ENCODE measurements at regions of chr10 and their contacts with region 1.

Region 1: GRCh38 chr10:32055813-32056600 is at the start of gene KIF5B:
- DNase-seq: peak; percentile 94
- H3K4me3 Mint-ChIP-seq: peak within 1 kb of the TSS; percentile 98
- H3K27ac Mint-ChIP-seq: peak within 1 kb of the TSS; percentile 75
- H3K4me1 Mint-ChIP-seq: peaks cover 8% of the 10 kb centered on the region
- H3K27me3 Mint-ChIP-seq: no peaks in the 10 kb centered on the region
- CTCF ChIP-seq: no peak
- total RNA-seq, gene KIF5B: 106 and 108 TPM in 2 replicates

Region 2: DNA sequence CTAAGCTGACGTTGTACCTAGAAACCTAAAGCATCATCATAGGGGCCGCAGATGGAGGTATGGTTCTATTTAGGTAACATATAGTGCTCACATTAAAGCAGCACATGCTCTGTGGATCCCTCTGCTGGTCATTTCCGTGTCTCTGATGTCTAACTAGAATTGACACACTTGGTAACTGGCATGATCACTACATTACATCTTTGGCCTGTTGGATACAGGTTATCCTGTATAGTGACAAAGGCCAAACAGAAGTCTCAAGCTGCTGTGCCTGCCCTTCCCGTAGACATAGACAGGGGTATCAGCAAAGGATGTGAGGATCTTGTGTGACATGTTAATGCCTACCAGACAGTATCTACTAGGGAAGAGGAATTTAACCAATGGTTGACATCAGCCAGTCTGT is 51.0 kb before region 1 on chr10:
- CTCF ChIA-PET with region 1: no interaction called
- intact Hi-C with region 1: no loop called
- DNase-seq: peak; percentile 64
- H3K4me3 Mint-ChIP-seq: no peak overlapping the region
- H3K27ac Mint-ChIP-seq: no peak overlapping the region
- H3K4me1 Mint-ChIP-seq: no peaks in the 10 kb centered on the region
- H3K27me3 Mint-ChIP-seq: no peaks in the 10 kb centered on the region
- CTCF ChIP-seq: peak; percentile 68

Region 3: DNA sequence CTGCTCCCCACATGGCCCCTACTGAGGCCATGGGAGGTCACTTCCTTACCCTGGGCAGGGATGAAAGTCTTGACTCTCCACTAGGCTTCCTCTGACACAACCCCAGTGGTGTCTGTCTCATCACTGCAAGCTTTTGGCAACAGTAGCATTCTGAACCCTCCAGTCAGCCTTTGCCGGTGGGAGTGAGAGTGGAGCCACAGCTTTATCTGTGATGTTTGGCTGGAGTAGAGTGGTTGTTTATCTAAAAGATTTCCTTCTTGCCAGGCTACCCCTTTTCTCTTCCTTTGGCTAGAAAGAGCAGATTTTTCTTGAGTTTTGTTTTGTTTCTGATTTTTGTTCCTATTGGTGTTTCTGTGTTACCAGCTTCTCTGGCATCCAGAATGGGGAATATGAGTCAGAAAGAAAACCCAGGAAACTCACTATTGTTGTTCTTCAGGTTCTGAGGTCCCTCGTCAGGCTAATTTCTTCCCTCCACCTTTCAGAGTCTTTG is 99.1 kb after region 1 on chr10:
- CTCF ChIA-PET with region 1: no interaction called
- intact Hi-C with region 1: loop called (anchors 10 kb)
- DNase-seq: no peak
- H3K4me3 Mint-ChIP-seq: no peak overlapping the region
- H3K27ac Mint-ChIP-seq: peak overlapping the region; percentile 79
- H3K4me1 Mint-ChIP-seq: peaks cover 28% of the 10 kb centered on the region
- H3K27me3 Mint-ChIP-seq: no peaks in the 10 kb centered on the region
- CTCF ChIP-seq: no peak

Measured in Calu3 (cell line).